Posterior vena cava (tissue), 2 donors: ENCODE measurements at regions of chr9 and their contacts with region 1.

Region 1: GRCh38 chr9:133142684-133143622 is 20.8 kb downstream of the GBGT1 start:
- DNase-seq: no peak

Region 2: DNA sequence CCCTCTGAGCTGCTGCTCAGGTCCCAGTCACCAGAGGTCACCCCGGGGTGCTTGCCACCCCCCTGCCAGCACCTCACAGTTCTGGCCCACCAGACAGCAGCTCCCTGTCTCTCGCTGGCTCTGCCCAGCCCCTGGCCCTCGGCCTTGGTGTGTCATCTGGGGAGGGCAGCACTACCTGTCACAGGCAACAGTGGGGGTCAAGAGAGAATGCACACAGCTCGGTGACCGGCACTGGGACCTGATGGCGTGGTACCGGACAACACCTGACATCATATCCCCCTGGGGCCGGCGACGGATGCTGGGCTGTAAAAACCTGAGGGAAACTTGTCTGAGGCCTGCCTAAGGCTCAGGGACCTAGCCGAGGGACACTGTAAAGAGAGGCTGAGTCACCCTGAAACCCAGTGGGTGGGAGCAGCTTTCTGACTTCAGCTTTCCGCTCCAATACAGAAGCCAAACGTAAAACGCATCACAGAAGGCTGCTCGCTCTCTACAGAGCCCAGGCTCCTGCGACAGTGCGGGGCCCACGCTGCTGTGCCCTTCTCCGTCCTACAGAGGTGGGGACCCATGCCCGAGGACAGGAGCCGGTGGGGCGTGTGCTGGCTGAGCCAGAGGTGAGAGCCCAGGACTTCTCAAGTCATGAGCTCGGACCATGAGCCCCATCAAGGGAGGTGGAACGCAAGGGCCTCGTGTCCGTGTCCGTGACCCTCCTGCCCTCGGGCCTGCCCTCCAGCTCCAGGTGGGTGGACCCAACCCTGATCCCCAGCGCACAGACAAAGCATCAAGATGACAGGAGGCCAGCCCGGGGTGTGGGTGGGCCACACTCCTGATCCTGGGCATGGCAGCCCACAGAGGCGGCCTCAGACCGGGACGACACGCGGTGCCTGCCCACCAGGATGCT is 27.3 kb before region 1 on chr9:
- intact Hi-C with region 1: loop called in 1 of 2 experiments (anchors 1 kb)
- DNase-seq: peak; percentile 78